Activated naive CD4-positive, alpha-beta T cell treated with anti-CD3 and anti-CD28 coated beads, Interleukin-2, amount 10 ng/mL, durations not matched to agents 7 days and 5 days (primary cell): ENCODE measurements at regions of chr12 and their contacts with region 1.

Region 1: DNA sequence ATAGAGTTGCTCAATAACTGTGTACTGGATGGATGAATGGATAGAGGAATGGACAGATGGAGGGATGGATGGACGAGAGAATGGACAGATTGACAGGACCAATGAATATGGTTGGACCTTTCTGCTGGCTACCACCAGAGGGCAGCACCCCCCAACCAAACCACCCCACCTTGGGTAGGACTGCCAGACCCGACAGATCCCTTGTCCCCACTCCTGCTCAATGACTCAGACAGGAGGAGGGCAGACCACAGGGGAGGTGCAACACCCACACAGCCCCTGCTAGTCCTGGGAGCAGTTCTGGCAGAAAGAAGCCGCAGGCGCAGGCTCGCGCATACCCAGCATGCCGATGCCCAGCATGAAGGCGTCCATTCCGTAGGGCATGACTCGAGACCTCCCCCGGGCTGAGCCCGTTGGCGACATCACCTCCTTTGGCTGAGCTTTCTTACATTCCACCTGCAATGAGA is 12.4 kb downstream of the MSI1 start:
- DNase-seq: peak; percentile 81
- H3K4me3 Mint-ChIP-seq: no peak overlapping the region
- H3K27ac Mint-ChIP-seq: no peak overlapping the region
- H3K4me1 Mint-ChIP-seq: no peaks in the 10 kb centered on the region
- H3K27me3 Mint-ChIP-seq: peaks cover 48% of the 10 kb centered on the region

Region 2: GRCh38 chr12:120301962-120302815 is 54.4 kb before region 1 on chr12 and contains the start of gene SIRT4:
- CTCF ChIA-PET with region 1: no interaction called
- DNase-seq: peak; percentile 95
- H3K4me3 Mint-ChIP-seq: peak within 1 kb of the TSS; percentile 81
- H3K27ac Mint-ChIP-seq: peak within 1 kb of the TSS; percentile 64
- H3K4me1 Mint-ChIP-seq: peaks cover 11% of the 10 kb centered on the region
- H3K27me3 Mint-ChIP-seq: no peaks in the 10 kb centered on the region

Region 3: DNA sequence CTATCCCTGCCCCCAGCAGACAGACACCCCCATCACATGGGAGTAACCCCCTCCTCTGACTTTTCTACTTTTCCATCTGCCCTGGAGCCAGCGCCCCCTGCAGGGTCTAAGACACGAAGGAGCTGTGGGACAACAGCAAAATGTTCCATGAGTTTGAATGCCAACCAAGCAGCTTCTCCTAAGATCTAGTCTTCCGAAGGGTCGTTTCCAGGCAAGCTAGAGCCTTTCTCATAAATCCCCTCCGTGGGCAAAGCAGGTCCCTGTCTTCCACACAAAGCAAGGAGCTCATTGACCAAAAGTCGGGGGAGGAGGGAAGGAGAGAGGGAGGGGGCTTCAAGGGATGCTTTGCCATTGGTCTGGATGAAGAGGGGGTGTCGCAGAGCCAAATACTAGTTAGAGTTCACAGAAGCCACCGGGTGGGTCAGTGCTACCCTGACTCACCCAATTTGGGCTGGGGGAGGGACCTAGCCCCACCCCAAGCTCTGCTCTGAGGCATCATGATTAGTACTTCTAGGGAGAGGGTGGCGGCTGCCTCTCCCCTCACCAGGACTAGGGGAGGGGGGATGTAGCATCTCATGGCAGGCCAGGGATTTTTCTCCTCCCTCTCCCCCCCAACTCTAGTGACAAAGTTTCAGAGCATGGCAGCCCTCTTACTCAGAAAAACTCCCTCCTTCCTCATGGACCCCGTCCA is 10.8 kb after region 1 on chr12:
- CTCF ChIA-PET with region 1: interaction called, 11 read pairs
- DNase-seq: no peak
- H3K4me3 Mint-ChIP-seq: peak overlapping the region; percentile 24
- H3K27ac Mint-ChIP-seq: no peak overlapping the region
- H3K4me1 Mint-ChIP-seq: peaks cover 17% of the 10 kb centered on the region
- H3K27me3 Mint-ChIP-seq: peaks cover 89% of the 10 kb centered on the region